ENCODE measurements at regions of chr12 and their contacts with region 1.

Region 1: DNA sequence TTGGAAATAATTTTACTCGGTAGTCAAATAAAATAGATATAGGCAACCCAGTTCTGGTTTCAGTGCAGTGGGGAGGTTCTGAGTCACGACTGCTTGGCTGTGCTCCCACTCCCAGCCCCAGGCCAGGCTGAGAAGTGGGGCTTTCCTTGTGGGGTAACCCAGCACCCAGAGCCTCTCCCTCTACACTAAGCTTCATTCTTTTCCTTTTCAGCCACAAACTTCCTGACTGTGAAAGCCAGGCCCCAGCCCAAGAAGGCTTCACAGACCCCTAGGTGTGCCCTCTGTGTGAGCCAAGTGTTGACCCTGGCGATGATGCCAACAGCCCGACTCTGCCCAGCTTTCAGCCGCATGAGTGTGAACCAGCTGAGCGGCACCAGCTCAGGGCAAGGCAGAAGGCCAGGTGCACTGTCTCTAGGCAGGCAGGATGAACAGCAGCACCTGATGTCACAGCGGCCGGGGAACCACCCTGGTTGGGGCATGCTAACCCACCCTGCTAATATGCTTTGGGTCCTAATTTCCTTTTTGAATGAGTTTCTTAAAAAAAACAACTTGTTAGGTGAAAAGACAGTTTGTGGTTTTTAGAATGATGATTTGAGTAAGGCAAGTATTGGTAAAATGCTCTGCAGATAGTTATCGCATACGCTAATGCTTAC is 42.2 kb upstream of the ATP23 start:
- DNase-seq: peak; percentile 81
- ATAC-seq: peak; percentile 30
- H3K4me3 ChIP-seq: no peak overlapping the region
- H3K27ac ChIP-seq: peak overlapping the region; percentile 97
- H3K4me1 ChIP-seq: peaks cover 47% of the 10 kb centered on the region
- H3K27me3 ChIP-seq: no peaks in the 10 kb centered on the region
- CTCF ChIP-seq: no peak
- POLR2A ChIP-seq: no peak
- RAD21 ChIP-seq: peak; percentile 6; the same call in 1 of the 2 replicates

Region 2: DNA sequence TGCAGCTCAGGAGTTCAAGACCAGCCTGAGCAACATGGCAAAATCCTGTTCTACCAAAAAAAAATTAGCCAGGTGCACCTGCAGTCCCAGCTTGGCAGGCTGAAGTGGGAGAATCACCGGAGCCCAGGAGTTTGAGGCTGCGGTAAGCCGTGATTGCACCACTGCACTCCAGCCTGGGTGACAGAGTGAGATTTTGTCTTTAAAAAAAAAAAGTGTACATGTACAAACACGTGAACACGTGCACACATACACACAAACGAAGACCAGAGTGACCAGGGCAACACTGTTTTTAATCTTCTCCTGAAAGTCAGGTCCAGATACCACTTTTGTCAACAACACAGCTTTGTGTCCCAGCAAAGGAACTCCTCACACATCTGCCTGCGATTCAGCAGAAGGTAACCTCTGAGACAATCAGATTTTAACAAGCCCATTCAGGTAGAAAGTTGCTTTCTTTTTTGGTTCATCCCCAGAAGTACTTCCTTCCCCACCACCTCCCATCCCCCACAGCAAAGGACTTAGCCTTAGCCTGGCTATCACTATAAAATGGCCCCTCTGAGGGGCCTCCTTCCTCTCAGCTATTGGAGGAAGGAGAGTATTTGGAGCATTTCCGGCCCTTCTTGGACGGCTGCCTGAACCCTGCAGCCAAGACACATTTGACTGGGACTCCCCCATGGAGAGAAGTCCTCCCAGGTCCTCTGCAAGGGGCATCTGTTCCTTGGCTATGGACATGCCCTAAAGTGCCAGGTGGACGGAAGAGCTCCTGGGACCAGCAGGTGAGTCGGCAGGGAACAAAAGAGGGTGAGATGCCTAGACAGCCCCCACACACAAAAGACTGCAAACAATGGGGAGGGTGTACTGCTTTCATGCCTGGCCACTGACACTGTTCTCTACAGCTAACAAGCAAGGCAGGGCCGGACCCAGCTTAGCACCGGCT is 62.4 kb before region 1 on chr12:
- CTCF ChIA-PET with region 1: interaction called, 10 read pairs
- POLR2A ChIA-PET with region 1: interaction called, 4 read pairs
- dilution Hi-C with region 1: no loop called
- in situ Hi-C with region 1: loop called (anchors 10 kb)
- intact Hi-C with region 1: no loop called
- DNase-seq: peak; percentile 86
- ATAC-seq: peak; percentile 66
- H3K4me3 ChIP-seq: no peak overlapping the region
- H3K27ac ChIP-seq: peak overlapping the region; percentile 77
- H3K4me1 ChIP-seq: peaks cover 66% of the 10 kb centered on the region
- H3K27me3 ChIP-seq: no peaks in the 10 kb centered on the region
- CTCF ChIP-seq: no peak
- POLR2A ChIP-seq: no peak
- RAD21 ChIP-seq: no peak

Region 3: GRCh38 chr12:57846577-57847319 is 52.4 kb before region 1 on chr12 and contains the start of gene CTDSP2:
- CTCF ChIA-PET with region 1: interaction called, 6 read pairs
- POLR2A ChIA-PET with region 1: interaction called, 16 read pairs
- dilution Hi-C with region 1: no loop called
- in situ Hi-C with region 1: loop called (anchors 10 kb)
- intact Hi-C with region 1: loop called (anchors 1 kb)
- DNase-seq: peak; percentile 98
- ATAC-seq: peak; percentile 81
- H3K4me3 ChIP-seq: peak within 1 kb of the TSS; percentile 99
- H3K27ac ChIP-seq: peak within 1 kb of the TSS; percentile 99
- H3K4me1 ChIP-seq: peaks cover 16% of the 10 kb centered on the region
- H3K27me3 ChIP-seq: no peaks in the 10 kb centered on the region; the same call in 1 of the 2 replicates
- CTCF ChIP-seq: no peak
- POLR2A ChIP-seq: peak; percentile 62; the same call in 1 of the 2 replicates
- RAD21 ChIP-seq: no peak
- total RNA-seq, gene CTDSP2: 79.4 and 114 TPM in 2 replicates

Region 4: DNA sequence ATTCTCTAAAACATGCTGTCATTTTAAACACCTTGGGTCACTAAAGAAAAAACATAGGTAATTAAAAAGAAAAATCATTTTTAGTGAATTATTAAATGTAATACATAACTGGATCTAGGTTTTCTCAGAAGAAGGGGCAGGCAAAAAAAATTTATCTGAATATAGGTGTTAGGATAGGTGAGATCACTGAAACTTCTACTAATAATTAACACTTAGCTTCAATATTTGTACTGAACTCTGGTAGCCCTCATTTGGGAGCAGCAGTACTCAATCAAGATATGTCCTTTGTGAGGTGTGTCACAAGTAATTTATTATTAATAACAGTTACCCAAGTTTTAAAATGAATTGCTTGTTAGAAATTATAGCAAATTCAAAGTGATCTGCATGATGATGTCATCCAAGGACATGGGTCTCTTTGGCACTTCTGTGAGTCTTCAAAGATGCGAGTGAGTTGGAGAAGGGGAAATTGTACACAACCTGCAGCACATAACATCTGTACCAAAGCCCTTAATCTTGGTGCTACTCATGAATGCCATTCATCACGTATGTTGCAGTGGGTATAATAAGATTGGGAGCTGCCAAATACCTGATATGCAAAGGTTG is 145.9 kb after region 1 on chr12:
- CTCF ChIA-PET with region 1: no interaction called
- POLR2A ChIA-PET with region 1: no interaction called
- dilution Hi-C with region 1: no loop called
- in situ Hi-C with region 1: no loop called
- intact Hi-C with region 1: no loop called
- DNase-seq: no peak
- ATAC-seq: no peak
- H3K4me3 ChIP-seq: no peak overlapping the region
- H3K27ac ChIP-seq: no peak overlapping the region
- H3K4me1 ChIP-seq: no peaks in the 10 kb centered on the region
- H3K27me3 ChIP-seq: no peaks in the 10 kb centered on the region; the same call in 1 of the 2 replicates
- CTCF ChIP-seq: no peak
- POLR2A ChIP-seq: no peak
- RAD21 ChIP-seq: no peak

Measured in IMR-90 (cell line).